ENCODE measurements at regions of chr6 and their contacts with region 1.

Region 1: DNA sequence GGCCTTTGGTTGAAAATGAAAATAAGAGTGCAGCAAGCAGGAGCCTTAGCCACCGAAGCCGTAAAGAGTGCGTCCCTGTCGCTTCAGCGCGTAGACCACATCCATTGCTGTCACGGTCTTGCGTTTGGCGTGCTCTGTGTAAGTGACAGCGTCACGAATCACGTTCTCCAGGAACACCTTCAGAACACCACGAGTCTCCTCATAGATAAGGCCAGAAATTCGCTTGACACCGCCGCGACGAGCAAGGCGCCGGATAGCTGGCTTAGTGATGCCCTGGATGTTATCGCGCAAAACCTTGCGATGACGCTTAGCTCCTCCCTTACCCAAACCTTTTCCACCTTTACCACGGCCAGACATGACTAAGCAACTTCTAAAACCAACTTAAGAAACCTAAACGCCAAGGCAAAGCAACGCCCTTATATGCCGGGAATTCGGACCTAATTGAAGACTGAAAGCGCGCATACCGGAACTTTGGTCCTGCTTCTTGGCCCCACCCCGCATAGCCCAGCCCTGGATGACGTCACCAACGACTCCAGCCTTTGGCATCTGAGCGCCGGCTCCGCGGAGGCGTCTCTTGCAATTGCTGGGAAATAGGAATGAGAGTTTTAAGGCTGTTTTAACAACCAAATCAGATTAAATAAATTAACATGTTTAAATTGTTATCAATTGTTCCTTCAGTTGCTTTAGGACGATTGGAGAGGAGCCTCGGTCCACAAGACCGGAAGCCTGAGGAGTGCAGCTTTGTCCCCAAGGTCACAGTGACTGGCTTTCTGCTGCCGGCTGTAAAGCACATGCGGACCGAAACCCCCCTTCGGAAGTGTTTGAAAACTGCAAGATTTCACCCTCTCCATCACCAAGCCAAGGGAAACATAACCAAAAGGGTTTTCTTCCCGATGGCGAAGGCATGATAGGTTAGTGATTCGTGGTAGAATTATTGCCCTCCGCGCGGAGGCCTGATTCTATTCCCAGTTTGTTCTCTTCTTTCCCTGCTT is 79.6 kb upstream of the BTN3A2 start:
- DNase-seq: peak; percentile 99
- ATAC-seq: peak; percentile 79
- H3K4me3 Mint-ChIP-seq: peak overlapping the region; percentile 93
- H3K27ac Mint-ChIP-seq: peak overlapping the region; percentile 95
- H3K4me1 Mint-ChIP-seq: peaks cover 42% of the 10 kb centered on the region
- H3K27me3 Mint-ChIP-seq: peaks cover 2% of the 10 kb centered on the region

Region 2: DNA sequence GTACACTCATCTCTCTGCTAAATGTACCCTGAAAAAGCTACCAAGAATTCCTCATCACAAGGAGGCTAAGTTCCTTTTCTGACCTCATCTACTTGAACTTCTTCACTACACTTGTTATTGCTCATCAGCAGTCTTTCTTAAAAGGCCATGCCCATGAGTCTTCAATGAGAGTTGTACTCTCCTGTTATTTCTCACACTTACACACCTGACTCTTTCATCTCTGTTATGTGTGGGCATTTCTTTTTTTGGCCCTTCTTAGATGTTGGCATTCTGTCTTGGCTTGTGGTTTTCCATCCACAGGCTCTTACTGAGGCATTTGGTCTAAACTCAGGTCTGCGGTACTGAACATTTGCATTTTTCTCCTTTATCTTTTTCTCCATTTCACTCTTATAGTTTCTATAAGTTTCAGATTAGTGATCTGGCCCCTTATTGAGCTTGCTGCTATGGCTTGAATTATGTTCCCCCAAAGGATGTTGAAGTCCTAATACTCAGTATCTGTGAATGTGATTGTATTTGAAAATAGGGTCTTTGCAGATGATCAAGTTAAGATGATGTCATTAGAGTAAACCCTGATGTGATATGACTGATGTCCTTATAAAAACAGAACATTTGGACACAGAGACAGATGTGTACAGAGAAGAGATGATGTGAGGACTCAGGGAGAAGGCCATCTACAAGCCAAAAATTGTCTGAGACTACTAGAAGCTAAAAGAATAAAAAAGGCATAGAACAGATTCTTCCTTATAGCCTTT is 442.7 kb before region 1 on chr6:
- CTCF ChIA-PET with region 1: no interaction called
- POLR2A ChIA-PET with region 1: no interaction called
- DNase-seq: no peak
- ATAC-seq: no peak
- H3K4me3 Mint-ChIP-seq: no peak overlapping the region
- H3K27ac Mint-ChIP-seq: no peak overlapping the region
- H3K4me1 Mint-ChIP-seq: no peaks in the 10 kb centered on the region
- H3K27me3 Mint-ChIP-seq: peaks cover 10% of the 10 kb centered on the region

Region 3: DNA sequence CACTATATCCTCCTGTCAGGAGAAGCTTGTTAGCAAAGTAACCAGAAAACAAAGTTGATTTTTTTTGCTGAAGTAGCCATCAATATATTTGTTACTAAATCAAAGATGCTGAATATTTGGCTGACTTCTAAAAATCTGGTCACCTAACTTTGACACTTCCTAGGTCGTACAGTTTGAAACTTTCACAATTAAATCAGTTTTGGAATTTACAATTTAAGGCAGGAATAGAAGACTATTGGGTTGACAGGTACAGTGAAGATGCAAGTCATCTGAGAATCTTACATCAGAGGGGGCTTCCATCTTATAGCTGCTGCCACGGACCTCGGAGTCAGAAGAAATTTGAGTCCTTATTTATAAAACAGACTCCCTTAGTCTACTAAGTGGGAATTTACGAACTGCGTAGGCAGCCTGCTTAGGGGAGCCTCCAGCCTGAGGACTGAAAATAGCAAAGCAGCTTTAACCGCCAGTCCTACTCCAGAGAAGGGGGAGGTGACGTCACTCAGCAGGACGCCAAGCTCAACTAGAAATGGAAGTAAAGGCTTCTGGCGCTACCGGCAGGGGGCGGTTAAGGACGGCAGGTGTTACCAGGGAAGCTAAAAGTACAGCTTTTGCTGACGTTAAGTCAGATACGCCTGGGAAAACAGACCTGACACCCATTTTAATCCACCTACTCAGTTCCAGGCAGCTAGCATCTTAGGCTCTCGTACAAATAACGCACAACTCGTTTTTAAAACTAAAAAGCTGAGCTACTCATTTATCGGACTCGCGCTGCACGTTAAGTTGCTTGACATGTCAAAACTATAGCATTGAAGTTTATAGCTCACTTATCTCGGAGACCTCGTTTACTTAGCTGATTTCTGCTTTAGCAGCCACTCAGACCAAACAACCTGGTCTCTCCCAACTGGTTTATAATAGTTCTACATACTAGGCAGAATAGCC is 259.3 kb before region 1 on chr6:
- CTCF ChIA-PET with region 1: no interaction called
- POLR2A ChIA-PET with region 1: interaction called, 14 read pairs
- DNase-seq: peak; percentile 97
- ATAC-seq: peak; percentile 42
- H3K4me3 Mint-ChIP-seq: peak overlapping the region; percentile 86
- H3K27ac Mint-ChIP-seq: peak overlapping the region; percentile 99
- H3K4me1 Mint-ChIP-seq: peaks cover 86% of the 10 kb centered on the region
- H3K27me3 Mint-ChIP-seq: peaks cover 3% of the 10 kb centered on the region

Region 4: GRCh38 chr6:26196846-26197648 is 88.4 kb before region 1 on chr6:
- CTCF ChIA-PET with region 1: no interaction called
- POLR2A ChIA-PET with region 1: interaction called, 84 read pairs
- DNase-seq: peak; percentile 92
- ATAC-seq: peak; percentile 43
- H3K4me3 Mint-ChIP-seq: peak overlapping the region; percentile 99
- H3K27ac Mint-ChIP-seq: peak overlapping the region; percentile 93
- H3K4me1 Mint-ChIP-seq: peaks cover 50% of the 10 kb centered on the region
- H3K27me3 Mint-ChIP-seq: no peaks in the 10 kb centered on the region

Region 5: GRCh38 chr6:26223650-26224546 is 61.5 kb before region 1 on chr6:
- CTCF ChIA-PET with region 1: no interaction called
- POLR2A ChIA-PET with region 1: interaction called, 11 read pairs
- DNase-seq: peak; percentile 83
- ATAC-seq: peak; percentile 83
- H3K4me3 Mint-ChIP-seq: no peak overlapping the region
- H3K27ac Mint-ChIP-seq: no peak overlapping the region
- H3K4me1 Mint-ChIP-seq: peaks cover 37% of the 10 kb centered on the region
- H3K27me3 Mint-ChIP-seq: no peaks in the 10 kb centered on the region

Region 6: GRCh38 chr6:26312501-26313390 is 27.3 kb after region 1 on chr6:
- CTCF ChIA-PET with region 1: interaction called, 4 read pairs
- POLR2A ChIA-PET with region 1: interaction called, 32 read pairs
- DNase-seq: peak; percentile 89
- ATAC-seq: peak; percentile 87
- H3K4me3 Mint-ChIP-seq: peak overlapping the region; percentile 84
- H3K27ac Mint-ChIP-seq: peak overlapping the region; percentile 89
- H3K4me1 Mint-ChIP-seq: peaks cover 49% of the 10 kb centered on the region
- H3K27me3 Mint-ChIP-seq: no peaks in the 10 kb centered on the region

Region 7: GRCh38 chr6:26408828-26409730 is 123.6 kb after region 1 on chr6:
- CTCF ChIA-PET with region 1: no interaction called
- POLR2A ChIA-PET with region 1: no interaction called
- DNase-seq: no peak
- ATAC-seq: no peak
- H3K4me3 Mint-ChIP-seq: no peak overlapping the region
- H3K27ac Mint-ChIP-seq: no peak overlapping the region
- H3K4me1 Mint-ChIP-seq: peaks cover 27% of the 10 kb centered on the region
- H3K27me3 Mint-ChIP-seq: no peaks in the 10 kb centered on the region

Region 8: DNA sequence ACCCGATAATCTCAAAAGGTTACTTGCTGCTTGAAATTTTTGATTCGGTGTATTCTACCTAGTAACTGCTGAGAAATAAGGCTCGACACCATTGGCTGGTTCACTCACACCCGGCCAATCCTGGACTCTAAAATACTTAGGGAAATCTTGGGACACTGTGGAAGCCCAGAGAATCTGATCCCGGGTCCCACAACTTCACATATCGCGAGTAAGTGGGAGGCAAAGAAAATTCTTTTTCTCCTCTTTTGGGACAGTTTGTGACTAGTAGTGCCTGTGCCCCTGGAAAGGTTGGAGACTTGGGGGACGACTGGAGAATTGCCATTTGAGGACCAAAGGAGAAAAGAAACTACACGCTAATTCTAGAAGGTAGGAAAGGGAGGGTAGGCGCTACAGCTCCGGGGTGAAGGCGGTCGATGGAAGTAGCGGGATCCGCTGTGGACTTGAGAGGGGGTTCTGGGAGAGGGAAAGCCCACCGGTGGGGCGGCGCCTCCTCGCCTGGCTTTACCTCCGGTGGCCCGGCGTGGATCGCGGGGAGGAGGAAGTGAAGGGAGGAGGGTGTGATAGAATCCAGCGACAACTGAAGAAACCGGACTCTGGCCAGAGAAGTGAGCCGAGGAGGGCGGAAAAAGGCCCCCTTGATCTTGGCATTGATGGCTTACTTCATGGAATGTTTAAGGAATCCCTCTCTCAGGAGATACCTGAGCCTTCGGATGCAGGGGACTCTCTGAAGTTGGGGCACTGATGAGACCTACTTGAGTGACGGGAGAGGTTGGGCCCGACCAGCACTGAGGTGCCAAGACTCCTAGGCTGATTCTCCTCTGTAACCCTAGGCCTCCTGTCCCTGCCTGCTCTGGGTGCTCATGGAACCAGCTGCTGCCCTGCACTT is 136.1 kb after region 1 on chr6:
- CTCF ChIA-PET with region 1: no interaction called
- POLR2A ChIA-PET with region 1: no interaction called
- DNase-seq: peak; percentile 68
- ATAC-seq: peak; percentile 97
- H3K4me3 Mint-ChIP-seq: no peak overlapping the region
- H3K27ac Mint-ChIP-seq: no peak overlapping the region
- H3K4me1 Mint-ChIP-seq: peaks cover 22% of the 10 kb centered on the region
- H3K27me3 Mint-ChIP-seq: no peaks in the 10 kb centered on the region

Region 9: GRCh38 chr6:27838058-27838944 is 1552.9 kb after region 1 on chr6:
- CTCF ChIA-PET with region 1: no interaction called
- POLR2A ChIA-PET with region 1: interaction called, 12 read pairs
- DNase-seq: peak; percentile 92
- ATAC-seq: peak; percentile 78
- H3K4me3 Mint-ChIP-seq: no peak overlapping the region
- H3K27ac Mint-ChIP-seq: no peak overlapping the region
- H3K4me1 Mint-ChIP-seq: peaks cover 33% of the 10 kb centered on the region
- H3K27me3 Mint-ChIP-seq: no peaks in the 10 kb centered on the region

Measured in activated CD8-positive, alpha-beta T cell treated with anti-CD3 and anti-CD28 coated beads, Interleukin-2, amount 10 ng/mL, durations not matched to agents 7 days and 5 days (primary cell).